ENCODE measurements at regions of chr4 and their contacts with region 1.

Region 1: GRCh38 chr4:76836860-76837562 is 60.9 kb downstream of the SOWAHB start:
- DNase-seq: no peak
- ATAC-seq: no peak
- H3K4me3 ChIP-seq: no peak overlapping the region
- H3K4me3 Mint-ChIP-seq: no peak overlapping the region
- H3K27ac ChIP-seq: no peak overlapping the region
- H3K27ac Mint-ChIP-seq: no peak overlapping the region
- H3K4me1 ChIP-seq: no peaks in the 10 kb centered on the region
- H3K4me1 Mint-ChIP-seq: no peaks in the 10 kb centered on the region
- H3K27me3 ChIP-seq: no peaks in the 10 kb centered on the region
- H3K27me3 Mint-ChIP-seq: no peaks in the 10 kb centered on the region

Region 2: GRCh38 chr4:76723924-76724323 is 113.1 kb before region 1 on chr4:
- CTCF ChIA-PET with region 1: no interaction called
- POLR2A ChIA-PET with region 1: no interaction called
- DNase-seq: no peak
- ATAC-seq: no peak
- H3K4me3 ChIP-seq: no peak overlapping the region
- H3K4me3 Mint-ChIP-seq: no peak overlapping the region
- H3K27ac ChIP-seq: no peak overlapping the region
- H3K27ac Mint-ChIP-seq: no peak overlapping the region
- H3K4me1 ChIP-seq: peaks cover 0 to 3% of the 10 kb centered on the region in 2 experiments
- H3K4me1 Mint-ChIP-seq: no peaks in the 10 kb centered on the region
- H3K27me3 ChIP-seq: peaks cover 0 to 6% of the 10 kb centered on the region in 2 experiments
- H3K27me3 Mint-ChIP-seq: peaks cover 7 to 18% of the 10 kb centered on the region in 2 donors

Region 3: DNA sequence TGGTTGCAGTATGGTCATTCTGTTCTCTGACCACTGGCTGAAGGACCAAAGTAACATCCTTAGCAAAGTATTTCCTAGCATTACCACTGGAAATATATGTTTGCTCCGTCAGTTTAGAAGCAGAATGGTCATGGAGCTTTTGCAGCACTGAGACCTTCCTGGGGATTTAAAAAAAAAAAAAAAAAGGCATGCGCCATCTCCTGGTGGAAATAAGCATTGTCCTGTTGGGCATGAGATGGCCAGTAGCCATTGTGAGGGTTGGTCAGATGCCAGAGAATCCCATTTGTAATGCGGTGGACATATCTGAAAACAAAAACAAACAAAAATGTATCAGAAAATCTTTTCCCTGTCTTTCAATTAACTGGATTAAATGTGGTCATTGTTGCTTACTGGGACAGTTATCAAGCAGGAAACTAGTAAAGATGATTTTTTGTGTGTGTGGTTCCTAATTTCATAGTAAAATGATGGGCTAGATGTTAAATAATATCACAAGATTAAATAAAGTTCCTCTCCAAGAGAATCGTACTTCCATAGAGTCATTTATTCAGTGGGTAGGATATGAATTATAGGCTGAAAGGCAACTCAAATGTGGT is 78.6 kb before region 1 on chr4:
- CTCF ChIA-PET with region 1: no interaction called
- POLR2A ChIA-PET with region 1: no interaction called
- DNase-seq: peak in 1 of 35 experiments; percentile 25
- ATAC-seq: no peak
- H3K4me3 ChIP-seq: no peak overlapping the region
- H3K4me3 Mint-ChIP-seq: no peak overlapping the region
- H3K27ac ChIP-seq: no peak overlapping the region
- H3K27ac Mint-ChIP-seq: no peak overlapping the region
- H3K4me1 ChIP-seq: no peaks in the 10 kb centered on the region
- H3K4me1 Mint-ChIP-seq: no peaks in the 10 kb centered on the region
- H3K27me3 ChIP-seq: peaks cover 0 to 14% of the 10 kb centered on the region in 2 experiments
- H3K27me3 Mint-ChIP-seq: peaks cover 10% of the 10 kb centered on the region in 2 donors

Region 4: GRCh38 chr4:76905531-76905930 is 68.5 kb after region 1 on chr4:
- CTCF ChIA-PET with region 1: no interaction called
- POLR2A ChIA-PET with region 1: no interaction called
- DNase-seq: no peak
- ATAC-seq: no peak
- H3K4me3 ChIP-seq: no peak overlapping the region
- H3K4me3 Mint-ChIP-seq: no peak overlapping the region
- H3K27ac ChIP-seq: no peak overlapping the region
- H3K27ac Mint-ChIP-seq: no peak overlapping the region
- H3K4me1 ChIP-seq: no peaks in the 10 kb centered on the region
- H3K4me1 Mint-ChIP-seq: no peaks in the 10 kb centered on the region
- H3K27me3 ChIP-seq: peaks cover 0 to 4% of the 10 kb centered on the region in 2 experiments
- H3K27me3 Mint-ChIP-seq: peaks cover 4 to 5% of the 10 kb centered on the region in 2 donors

Region 5: DNA sequence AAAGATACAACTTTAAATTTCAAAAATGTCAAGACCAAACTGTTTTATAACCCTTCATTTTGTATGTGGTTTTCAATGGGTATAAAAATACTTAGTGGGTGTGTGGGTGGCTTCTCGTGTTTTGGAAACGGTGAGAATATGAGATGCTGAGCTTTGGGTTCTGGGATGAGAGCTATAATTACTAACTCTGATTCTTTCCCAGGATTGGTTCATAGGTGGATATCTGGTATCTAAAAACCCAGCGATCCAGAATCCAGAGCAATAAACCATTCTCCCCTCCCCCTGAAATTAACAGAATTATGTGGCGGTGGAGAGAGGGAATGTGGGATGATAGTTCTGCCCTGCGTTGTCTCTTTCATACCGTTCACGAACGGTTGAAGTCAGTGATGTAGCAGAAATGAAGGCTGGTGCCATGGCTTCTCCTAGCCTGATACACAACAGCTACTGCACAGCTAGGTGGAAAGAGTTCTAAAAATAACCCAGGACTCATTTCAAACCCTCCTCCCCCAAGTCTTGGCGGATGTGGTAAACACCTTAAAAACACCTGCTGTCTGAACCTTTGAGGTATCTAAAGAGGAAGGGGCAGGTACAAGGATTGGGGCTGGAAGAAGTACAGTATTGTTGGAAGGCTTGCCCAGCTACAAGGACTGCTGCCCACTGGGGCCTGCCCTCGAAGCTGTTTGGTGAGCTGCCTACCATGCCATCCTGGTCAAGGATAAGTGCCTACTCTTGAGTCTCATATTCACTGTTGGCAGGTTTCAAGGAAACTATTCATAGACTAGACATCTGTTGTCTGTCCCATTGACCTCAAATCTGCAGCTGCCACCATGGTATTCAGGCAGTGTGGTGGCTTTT is 157.0 kb after region 1 on chr4:
- CTCF ChIA-PET with region 1: no interaction called
- POLR2A ChIA-PET with region 1: interaction called in 1 of 2 experiments, 10 read pairs
- DNase-seq: peak; percentile 29 to 81 (median 51)
- ATAC-seq: peak; percentile 84 to 89 (median 86)
- H3K4me3 ChIP-seq: peak overlapping the region; percentile 25 to 59
- H3K4me3 Mint-ChIP-seq: peak overlapping the region; percentile 52 to 66 (median 59)
- H3K27ac ChIP-seq: peak overlapping the region; percentile 58
- H3K27ac Mint-ChIP-seq: peak overlapping the region; percentile 68 to 86
- H3K4me1 ChIP-seq: peaks cover 41 to 54% of the 10 kb centered on the region in 2 experiments
- H3K4me1 Mint-ChIP-seq: peaks cover 61 to 70% (median 62%) of the 10 kb centered on the region in 3 donors
- H3K27me3 ChIP-seq: no peaks in the 10 kb centered on the region
- H3K27me3 Mint-ChIP-seq: no peaks in the 10 kb centered on the region

Measured in T-cell (primary cell).